ENCODE measurements at regions of chr1 and their contacts with region 1.

Region 1: DNA sequence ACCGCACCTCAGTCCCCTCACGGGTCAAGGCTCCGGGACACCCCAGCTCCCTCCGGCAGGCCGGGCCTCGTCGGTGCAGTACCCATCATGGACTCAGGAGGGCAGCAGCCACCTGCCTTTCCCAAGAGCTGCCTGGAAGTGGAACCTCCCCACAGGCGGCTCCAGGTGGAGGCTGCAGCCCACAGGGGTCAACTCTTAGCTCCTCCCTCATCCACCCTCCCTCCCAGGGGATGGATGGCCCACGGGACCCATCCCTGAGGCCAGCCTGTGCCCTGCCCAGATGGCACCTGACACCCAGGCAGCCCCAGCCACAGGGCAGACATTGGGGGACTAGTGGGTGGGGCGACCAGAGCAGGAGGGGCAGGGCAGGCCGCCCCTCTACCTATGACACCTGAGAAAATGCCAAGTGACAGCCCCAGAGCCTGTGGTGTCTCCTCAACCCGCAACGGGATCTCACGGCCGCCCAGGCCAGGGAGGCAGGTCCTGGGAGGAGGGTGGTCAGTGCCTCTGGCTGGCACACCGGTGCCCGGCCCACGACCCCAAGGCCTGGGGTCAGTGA is 1.2 kb upstream of the ARHGEF16 start:
- DNase-seq: no peak
- H3K4me3 ChIP-seq: no peak overlapping the region
- H3K27me3 ChIP-seq: peaks cover 5% of the 10 kb centered on the region
- CTCF ChIP-seq: peak; percentile 93

Region 2: DNA sequence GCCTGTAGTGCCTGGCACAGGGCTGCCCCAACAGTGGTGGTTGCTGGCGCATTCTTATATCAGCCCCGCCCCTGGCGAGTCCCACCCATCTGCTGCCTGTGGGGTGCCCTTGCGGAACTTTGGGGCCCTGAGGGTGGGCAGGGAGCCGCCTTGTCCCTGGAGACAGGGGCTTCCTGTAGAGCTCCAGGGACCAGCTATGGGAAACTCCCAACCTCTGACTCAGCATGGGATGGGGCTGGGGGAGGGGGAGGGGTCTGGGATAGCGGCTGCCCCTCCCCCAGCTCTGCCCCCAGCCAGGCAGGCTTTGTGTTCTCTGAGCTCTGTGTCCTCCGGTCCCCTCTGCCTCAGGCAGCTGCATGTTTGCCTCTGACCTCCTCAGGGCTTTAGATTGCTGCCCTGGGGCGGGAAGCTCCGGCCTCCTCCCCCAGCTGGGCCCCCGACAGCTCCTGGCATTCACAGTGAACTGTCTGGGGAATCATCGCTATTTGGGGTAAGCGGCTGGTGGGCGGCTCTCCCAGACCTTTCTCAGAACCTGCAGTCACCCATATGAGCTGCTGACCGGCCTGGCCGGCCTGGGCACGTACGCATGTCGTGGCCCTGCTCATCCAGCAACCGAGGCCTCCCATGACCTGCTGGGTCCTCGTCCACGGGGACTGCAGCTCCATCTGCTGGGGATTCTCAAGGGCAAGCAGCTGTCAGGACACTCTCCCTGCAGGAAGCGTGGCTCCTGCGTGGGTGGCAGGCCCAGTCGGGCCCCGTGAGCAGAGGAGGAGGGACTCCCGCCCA is 18.2 kb after region 1 on chr1:
- CTCF ChIA-PET with region 1: interaction called, 72 read pairs
- POLR2A ChIA-PET with region 1: no interaction called
- DNase-seq: no peak
- H3K4me3 ChIP-seq: no peak overlapping the region
- H3K27me3 ChIP-seq: no peaks in the 10 kb centered on the region
- CTCF ChIP-seq: peak; percentile 68

Region 3: GRCh38 chr1:3564921-3565827 is 111.9 kb after region 1 on chr1:
- CTCF ChIA-PET with region 1: interaction called, 16 read pairs
- POLR2A ChIA-PET with region 1: no interaction called
- DNase-seq: no peak
- H3K4me3 ChIP-seq: no peak overlapping the region
- H3K27me3 ChIP-seq: no peaks in the 10 kb centered on the region
- CTCF ChIP-seq: peak; percentile 98

Region 4: GRCh38 chr1:3624200-3625136 is 171.2 kb after region 1 on chr1 and contains the start of gene TPRG1L:
- CTCF ChIA-PET with region 1: interaction called, 147 read pairs
- POLR2A ChIA-PET with region 1: interaction called, 3 read pairs
- DNase-seq: peak; percentile 74
- H3K4me3 ChIP-seq: peak within 1 kb of the TSS; percentile 98
- H3K27me3 ChIP-seq: no peaks in the 10 kb centered on the region
- CTCF ChIP-seq: no peak
- polyA plus RNA-seq, gene TPRG1L: 45.8 and 52.1 TPM in 2 replicates

Region 5: GRCh38 chr1:3721955-3722465 is 268.7 kb after region 1 on chr1:
- CTCF ChIA-PET with region 1: interaction called, 24 read pairs
- POLR2A ChIA-PET with region 1: no interaction called
- DNase-seq: no peak
- H3K4me3 ChIP-seq: no peak overlapping the region
- H3K27me3 ChIP-seq: peaks cover 3% of the 10 kb centered on the region
- CTCF ChIP-seq: no peak

Measured in BJ (cell line).